ENCODE measurements at regions of chr6 and their contacts with region 1.

Region 1: DNA sequence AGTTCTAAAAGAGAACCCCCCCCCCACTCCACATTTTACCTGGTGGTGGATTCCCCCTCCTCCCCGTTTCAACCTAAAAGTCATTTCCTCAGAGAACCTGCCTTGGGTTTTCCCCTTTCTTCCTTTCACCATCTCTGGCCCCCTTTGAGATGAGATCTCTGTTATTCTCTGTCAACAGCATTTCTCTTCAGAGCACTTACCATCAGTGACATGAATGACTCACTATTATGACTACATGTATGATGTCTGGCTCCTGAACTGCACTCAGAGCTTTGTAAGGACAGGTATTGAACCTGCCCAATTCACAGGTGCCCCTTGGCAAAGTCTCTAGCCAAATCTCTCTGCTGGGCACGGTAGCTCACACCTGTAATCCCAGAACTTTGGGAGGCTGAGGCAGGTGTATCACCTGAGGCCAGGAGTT is 61.4 kb upstream of the JARID2 start:
- DNase-seq: peak; percentile 58
- H3K4me3 Mint-ChIP-seq: peak overlapping the region; percentile 37
- H3K27ac Mint-ChIP-seq: peak overlapping the region; percentile 95
- H3K4me1 Mint-ChIP-seq: peaks cover 20% of the 10 kb centered on the region
- H3K27me3 Mint-ChIP-seq: no peaks in the 10 kb centered on the region

Region 2: GRCh38 chr6:15129887-15130286 is 54.6 kb before region 1 on chr6:
- CTCF ChIA-PET with region 1: no interaction called
- POLR2A ChIA-PET with region 1: no interaction called
- intact Hi-C with region 1: loop called (anchors 1 kb)
- DNase-seq: peak; percentile 42
- H3K4me3 Mint-ChIP-seq: no peak overlapping the region
- H3K27ac Mint-ChIP-seq: peak overlapping the region; percentile 54
- H3K4me1 Mint-ChIP-seq: peaks cover 33% of the 10 kb centered on the region
- H3K27me3 Mint-ChIP-seq: no peaks in the 10 kb centered on the region

Region 3: DNA sequence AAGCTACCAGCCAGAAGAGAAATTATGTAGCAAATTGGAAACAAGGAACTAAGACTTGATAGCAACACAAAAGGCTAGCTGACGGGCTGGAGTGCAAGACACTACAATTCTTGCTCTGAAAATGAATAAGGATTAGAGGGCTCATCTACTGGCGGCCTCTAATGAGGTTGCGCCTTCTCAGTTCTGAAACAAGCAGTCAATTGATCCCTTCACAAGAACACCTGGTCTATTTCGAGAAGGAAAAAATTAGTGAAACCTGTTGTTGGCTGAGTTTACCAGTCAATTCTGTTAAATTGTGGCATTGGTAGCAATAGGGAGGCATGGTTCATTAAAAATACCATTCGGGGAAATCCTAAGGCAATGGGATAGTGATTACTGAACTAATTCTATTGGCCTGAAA is 13.4 kb before region 1 on chr6:
- CTCF ChIA-PET with region 1: interaction called, 4 read pairs
- POLR2A ChIA-PET with region 1: no interaction called
- intact Hi-C with region 1: loop called (anchors 2 kb)
- DNase-seq: peak; percentile 36
- H3K4me3 Mint-ChIP-seq: no peak overlapping the region
- H3K27ac Mint-ChIP-seq: no peak overlapping the region
- H3K4me1 Mint-ChIP-seq: peaks cover 8% of the 10 kb centered on the region
- H3K27me3 Mint-ChIP-seq: peaks cover 1% of the 10 kb centered on the region

Region 4: GRCh38 chr6:15340775-15341174 is 156.3 kb after region 1 on chr6:
- CTCF ChIA-PET with region 1: no interaction called
- POLR2A ChIA-PET with region 1: no interaction called
- intact Hi-C with region 1: no loop called
- DNase-seq: no peak
- H3K4me3 Mint-ChIP-seq: no peak overlapping the region
- H3K27ac Mint-ChIP-seq: peak overlapping the region; percentile 32
- H3K4me1 Mint-ChIP-seq: peaks cover 76% of the 10 kb centered on the region
- H3K27me3 Mint-ChIP-seq: no peaks in the 10 kb centered on the region

Region 5: DNA sequence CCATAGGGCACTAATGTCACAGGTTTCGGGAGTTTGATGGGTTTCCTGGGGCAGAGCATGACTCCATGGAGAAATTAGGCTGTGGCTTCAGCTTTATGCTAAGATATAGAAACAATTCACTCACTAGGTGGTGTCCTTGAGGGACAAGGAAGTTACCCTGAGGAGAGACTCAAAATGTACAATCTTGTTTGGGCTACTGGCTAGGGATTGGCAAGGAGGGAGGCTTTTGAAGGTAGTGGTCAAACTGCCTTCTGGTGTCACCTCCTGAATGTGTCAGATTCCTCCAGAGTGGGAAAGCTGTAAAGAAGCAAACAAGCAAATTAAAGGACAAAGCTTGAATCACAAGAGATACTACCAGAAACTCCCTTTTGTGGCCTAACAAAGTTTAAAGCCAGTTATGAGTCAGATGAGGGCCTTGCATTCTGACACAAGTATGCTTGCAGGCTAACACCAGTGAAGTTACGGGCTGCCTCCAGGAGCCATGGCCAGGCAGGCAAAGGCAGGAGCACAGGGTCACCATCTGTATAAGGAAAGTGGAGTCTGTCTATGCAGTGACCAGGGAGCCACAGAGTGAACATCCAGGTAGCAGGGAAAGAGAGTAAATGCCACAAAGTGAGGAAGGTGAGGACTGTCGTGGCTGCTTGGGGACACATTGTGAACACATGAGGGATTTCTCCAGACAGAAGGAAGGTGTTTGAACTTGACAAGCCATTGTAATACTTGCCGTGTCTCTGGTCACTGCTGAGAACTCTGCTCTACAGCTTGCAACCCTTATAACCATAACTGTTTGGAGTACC is 586.1 kb after region 1 on chr6:
- CTCF ChIA-PET with region 1: no interaction called
- POLR2A ChIA-PET with region 1: no interaction called
- intact Hi-C with region 1: no loop called
- DNase-seq: peak; percentile 55
- H3K4me3 Mint-ChIP-seq: no peak overlapping the region
- H3K27ac Mint-ChIP-seq: peak overlapping the region; percentile 71
- H3K4me1 Mint-ChIP-seq: peaks cover 42% of the 10 kb centered on the region
- H3K27me3 Mint-ChIP-seq: peaks cover 6% of the 10 kb centered on the region